Endothelial cell of umbilical vein (primary cell): ENCODE measurements at regions of chr3 and their contacts with region 1.

Region 1: DNA sequence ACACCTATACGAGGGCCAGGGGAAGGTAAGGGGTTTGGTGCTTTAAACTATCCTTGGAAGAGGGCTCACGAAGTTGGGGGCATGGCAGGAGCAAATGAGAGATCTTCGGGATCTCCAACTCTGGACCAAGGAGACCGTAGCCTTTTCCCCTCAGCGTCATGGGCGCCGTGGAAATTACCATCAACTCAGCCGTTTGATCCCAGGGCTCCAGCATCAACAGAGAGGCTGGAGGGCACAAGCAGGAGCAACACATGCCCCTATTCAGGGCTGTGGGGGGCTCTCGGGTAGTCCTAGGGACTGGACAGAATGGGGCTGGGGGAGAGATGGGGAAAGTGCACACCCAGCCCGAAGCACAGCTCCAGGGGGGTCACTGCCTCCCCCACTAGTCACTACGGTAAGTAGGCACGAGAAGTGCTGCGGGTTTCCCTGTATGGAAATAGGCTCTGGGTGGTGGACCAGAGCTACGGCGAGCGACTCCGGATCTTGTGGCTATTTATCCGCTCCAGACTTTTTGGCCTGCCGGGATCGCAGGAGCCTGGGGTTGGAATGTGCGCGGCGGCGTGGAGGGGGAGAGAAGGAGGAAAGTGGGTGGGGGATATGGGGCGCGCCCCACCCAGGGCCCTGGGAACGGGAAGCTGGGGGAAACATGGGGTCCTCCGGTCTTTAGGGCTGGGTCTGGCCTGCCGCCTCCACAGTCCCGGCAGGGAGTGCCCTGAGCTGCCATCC is 539 bp upstream of the LAMB2 start:
- DNase-seq: peak; percentile 92
- H3K4me3 ChIP-seq: peak overlapping the region; percentile 58 to 89 (median 83)
- H3K27ac ChIP-seq: peak overlapping the region; percentile 58
- H3K4me1 ChIP-seq: peaks cover 14% of the 10 kb centered on the region
- H3K27me3 ChIP-seq: no peaks in the 10 kb centered on the region
- CTCF ChIP-seq: no peak
- POLR2A ChIP-seq: peak; percentile 76

Region 2: GRCh38 chr3:49104483-49105291 is 28.7 kb before region 1 on chr3 and contains the start of gene QARS1:
- CTCF ChIA-PET with region 1: no interaction called
- POLR2A ChIA-PET with region 1: interaction called, 3 read pairs
- dilution Hi-C with region 1: no loop called
- intact Hi-C with region 1: loop called (anchors 2 kb)
- DNase-seq: peak; percentile 94
- H3K4me3 ChIP-seq: peak within 1 kb of the TSS; percentile 67 to 90 (median 85)
- H3K27ac ChIP-seq: peak within 1 kb of the TSS; percentile 72
- H3K4me1 ChIP-seq: peaks cover 9% of the 10 kb centered on the region
- H3K27me3 ChIP-seq: no peaks in the 10 kb centered on the region
- CTCF ChIP-seq: no peak
- POLR2A ChIP-seq: peak; percentile 90
- total RNA-seq, gene QARS1: 261 and 285 TPM in 2 replicates

Region 3: DNA sequence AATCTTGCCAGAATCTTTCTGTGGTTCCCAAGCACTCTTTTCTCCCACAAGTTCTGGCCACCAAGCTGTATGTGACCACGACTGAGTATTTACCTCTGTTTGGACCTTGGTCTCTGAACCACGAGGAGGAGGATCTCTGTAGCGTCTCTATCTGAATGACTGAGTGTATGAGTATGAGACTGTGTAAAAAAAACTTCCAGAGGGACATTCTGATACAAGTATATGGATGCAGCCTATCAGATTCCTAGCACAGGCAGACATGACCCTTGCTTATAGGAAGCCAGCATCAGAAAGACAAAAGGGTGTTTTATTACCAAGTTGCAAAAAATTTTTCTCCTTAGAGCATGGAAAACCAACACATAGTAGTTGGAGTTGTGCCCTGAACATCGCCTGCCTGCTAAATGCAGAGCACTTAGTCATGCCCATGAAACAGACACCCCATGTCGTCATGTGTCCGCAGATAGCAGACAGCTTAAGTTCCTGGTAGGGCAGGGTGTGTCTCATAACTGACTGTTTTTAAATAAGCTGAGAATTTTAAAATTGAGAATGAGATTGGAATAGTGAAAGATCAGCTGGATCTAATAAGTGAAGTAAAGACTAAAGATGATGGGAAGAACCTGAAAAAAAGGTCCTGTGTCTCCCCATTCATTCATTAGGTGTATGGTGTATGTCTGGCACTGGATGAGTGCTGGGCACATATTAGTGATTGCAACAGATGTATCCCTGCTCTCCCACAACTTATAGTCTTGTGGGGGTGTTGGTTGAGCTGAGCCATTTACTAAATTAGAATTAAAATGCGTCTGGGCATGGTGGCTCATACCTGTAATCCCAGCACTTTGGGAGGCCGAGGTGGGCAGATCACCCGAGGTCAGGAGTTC is 367.6 kb after region 1 on chr3:
- CTCF ChIA-PET with region 1: no interaction called
- POLR2A ChIA-PET with region 1: no interaction called
- dilution Hi-C with region 1: no loop called
- intact Hi-C with region 1: no loop called
- DNase-seq: peak; percentile 79
- H3K4me3 ChIP-seq: no peak overlapping the region
- H3K27ac ChIP-seq: peak overlapping the region; percentile 48
- H3K4me1 ChIP-seq: peaks cover 8% of the 10 kb centered on the region
- H3K27me3 ChIP-seq: no peaks in the 10 kb centered on the region
- CTCF ChIP-seq: no peak
- POLR2A ChIP-seq: no peak